ENCODE measurements at regions of chr10 and their contacts with region 1.

Region 1: GRCh38 chr10:119596537-119597404 is at the start of gene TIAL1:
- DNase-seq: peak; percentile 96
- ATAC-seq: peak; percentile 86
- H3K4me3 ChIP-seq: peak within 1 kb of the TSS; percentile 86 to 97 (median 90)
- H3K4me3 Mint-ChIP-seq: peak within 1 kb of the TSS; percentile 99
- H3K27ac ChIP-seq: peak within 1 kb of the TSS; percentile 88 to 94
- H3K27ac Mint-ChIP-seq: peak within 1 kb of the TSS; percentile 98
- H3K4me1 ChIP-seq: peaks cover 31 to 43% of the 10 kb centered on the region in 2 donors
- H3K4me1 Mint-ChIP-seq: peaks cover 54% of the 10 kb centered on the region
- H3K27me3 ChIP-seq: no peaks in the 10 kb centered on the region
- H3K27me3 Mint-ChIP-seq: no peaks in the 10 kb centered on the region
- CTCF ChIP-seq: no peak
- total RNA-seq, gene TIAL1: 159 and 175 TPM in 2 replicates

Region 2: DNA sequence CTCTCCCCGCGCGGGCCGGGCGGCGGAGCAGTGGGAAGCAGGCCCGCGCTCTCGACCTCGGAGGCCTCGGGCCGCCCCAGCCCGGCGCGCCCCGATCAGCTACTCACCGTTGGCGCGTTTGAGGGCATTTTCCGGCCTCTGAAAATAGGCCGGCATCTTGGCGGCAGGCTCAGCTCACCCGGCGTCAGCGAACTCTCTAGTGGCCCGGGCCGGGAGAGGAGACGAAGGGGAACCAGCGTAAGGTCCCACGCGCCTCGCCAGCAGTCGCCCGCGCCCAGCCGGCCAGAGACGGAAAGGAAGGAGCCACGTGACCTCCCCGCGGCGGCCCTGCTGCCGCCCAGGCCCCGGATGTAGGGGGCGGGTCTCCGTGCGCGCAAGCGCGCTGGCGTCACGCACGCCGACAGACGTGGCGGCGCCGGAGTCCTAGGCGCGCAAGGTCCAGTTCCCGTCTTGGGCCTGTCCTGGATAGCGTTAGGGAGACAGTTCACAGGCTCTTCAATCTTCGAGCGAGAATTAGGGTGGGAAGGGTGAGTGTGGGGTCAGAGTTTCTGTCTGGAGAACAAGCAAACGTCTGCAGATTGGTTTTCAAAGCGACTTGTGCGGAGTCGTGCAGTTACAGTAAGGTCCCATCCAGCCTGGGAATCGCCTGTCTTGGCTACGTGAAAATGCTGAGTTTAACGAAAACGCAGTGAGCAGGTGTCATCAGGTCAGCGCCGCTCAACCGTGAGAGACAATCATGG is 516.1 kb before region 1 on chr10 and contains the start of gene EIF3A:
- CTCF ChIA-PET with region 1: no interaction called
- POLR2A ChIA-PET with region 1: no interaction called
- intact Hi-C with region 1: loop called (anchors 1 kb)
- DNase-seq: peak; percentile 95
- ATAC-seq: peak; percentile 81
- H3K4me3 ChIP-seq: peak within 1 kb of the TSS; percentile 69 to 93 (median 86)
- H3K4me3 Mint-ChIP-seq: peak within 1 kb of the TSS; percentile 96
- H3K27ac ChIP-seq: peak within 1 kb of the TSS; percentile 92 to 97
- H3K27ac Mint-ChIP-seq: peak within 1 kb of the TSS; percentile 96
- H3K4me1 ChIP-seq: peaks cover 36 to 52% of the 10 kb centered on the region in 2 donors
- H3K4me1 Mint-ChIP-seq: peaks cover 50% of the 10 kb centered on the region
- H3K27me3 ChIP-seq: no peaks in the 10 kb centered on the region
- H3K27me3 Mint-ChIP-seq: no peaks in the 10 kb centered on the region
- CTCF ChIP-seq: no peak
- total RNA-seq, gene EIF3A: 94.3 and 94.5 TPM in 2 replicates

Region 3: GRCh38 chr10:119178372-119179119 is 418.2 kb before region 1 on chr10 and contains the start of gene PRDX3:
- CTCF ChIA-PET with region 1: no interaction called
- POLR2A ChIA-PET with region 1: no interaction called
- intact Hi-C with region 1: loop called (anchors 1 kb)
- DNase-seq: peak; percentile 92
- ATAC-seq: peak; percentile 99
- H3K4me3 ChIP-seq: peak within 1 kb of the TSS; percentile 88 to 98 (median 89)
- H3K4me3 Mint-ChIP-seq: peak within 1 kb of the TSS; percentile 94
- H3K27ac ChIP-seq: peak within 1 kb of the TSS; percentile 68 to 71
- H3K27ac Mint-ChIP-seq: peak within 1 kb of the TSS; percentile 90
- H3K4me1 ChIP-seq: peaks cover 11 to 15% of the 10 kb centered on the region in 2 donors
- H3K4me1 Mint-ChIP-seq: peaks cover 28% of the 10 kb centered on the region
- H3K27me3 ChIP-seq: no peaks in the 10 kb centered on the region
- H3K27me3 Mint-ChIP-seq: no peaks in the 10 kb centered on the region
- CTCF ChIP-seq: peak; percentile 29
- total RNA-seq, gene PRDX3: 36.2 and 36.3 TPM in 2 replicates

Region 4: GRCh38 chr10:119542988-119543813 is 53.6 kb before region 1 on chr10:
- CTCF ChIA-PET with region 1: no interaction called
- POLR2A ChIA-PET with region 1: no interaction called
- intact Hi-C with region 1: loop called (anchors 1 kb)
- DNase-seq: peak; percentile 81
- ATAC-seq: peak; percentile 46
- H3K4me3 ChIP-seq: peak overlapping the region in 4 of 5 experiments; percentile 58 to 78 (median 72)
- H3K4me3 Mint-ChIP-seq: peak overlapping the region; percentile 95
- H3K27ac ChIP-seq: no peak overlapping the region
- H3K27ac Mint-ChIP-seq: peak overlapping the region; percentile 85
- H3K4me1 ChIP-seq: peaks cover 11 to 22% of the 10 kb centered on the region in 2 donors
- H3K4me1 Mint-ChIP-seq: peaks cover 29% of the 10 kb centered on the region
- H3K27me3 ChIP-seq: peaks cover 0 to 3% (median 0%) of the 10 kb centered on the region in 4 experiments
- H3K27me3 Mint-ChIP-seq: peaks cover 8% of the 10 kb centered on the region
- CTCF ChIP-seq: peak; percentile 71

Region 5: DNA sequence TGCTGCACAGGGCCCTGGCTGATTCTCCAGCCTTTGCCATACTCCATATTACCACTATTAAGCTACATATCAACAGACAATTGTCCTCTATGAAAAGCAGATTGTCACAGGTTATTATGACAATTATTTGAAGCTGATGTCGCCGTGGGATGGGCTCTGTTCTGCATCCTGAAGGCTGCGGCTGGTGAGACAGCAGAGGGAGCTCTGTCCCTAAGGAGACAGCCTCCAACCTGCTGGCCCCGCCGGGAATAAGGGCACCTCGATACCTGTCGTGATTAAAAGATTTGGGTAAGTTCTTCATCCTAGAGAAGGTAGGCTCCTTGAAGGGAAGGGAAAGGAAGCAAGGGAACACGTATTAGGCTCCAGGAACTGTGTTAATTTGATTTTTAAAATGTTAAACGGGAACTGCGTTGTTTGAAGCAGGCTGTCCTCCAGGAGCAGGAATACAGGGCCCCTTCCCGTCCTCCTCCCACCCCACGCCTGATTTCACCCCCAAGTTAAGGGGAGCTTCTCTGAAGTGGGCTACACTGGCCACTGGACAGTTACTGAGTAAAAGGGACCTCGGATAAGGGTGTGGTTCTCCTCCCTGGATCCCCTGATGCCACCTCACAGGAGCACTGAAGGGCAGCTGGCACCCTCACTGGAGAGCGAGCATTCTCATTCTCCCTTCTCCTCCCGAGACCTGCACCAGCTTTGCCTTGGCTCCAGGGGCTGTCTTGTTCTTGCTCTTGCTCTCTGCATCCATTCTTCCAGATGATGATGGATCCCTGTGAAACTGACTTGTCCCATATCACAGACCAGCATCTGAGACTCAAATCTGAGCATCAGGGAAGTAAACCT is 11.8 kb after region 1 on chr10:
- CTCF ChIA-PET with region 1: no interaction called
- POLR2A ChIA-PET with region 1: no interaction called
- intact Hi-C with region 1: no loop called
- DNase-seq: peak; percentile 36
- ATAC-seq: no peak
- H3K4me3 ChIP-seq: no peak overlapping the region
- H3K4me3 Mint-ChIP-seq: no peak overlapping the region
- H3K27ac ChIP-seq: no peak overlapping the region
- H3K27ac Mint-ChIP-seq: no peak overlapping the region
- H3K4me1 ChIP-seq: peaks cover 0 to 5% of the 10 kb centered on the region in 2 donors
- H3K4me1 Mint-ChIP-seq: peaks cover 6% of the 10 kb centered on the region
- H3K27me3 ChIP-seq: no peaks in the 10 kb centered on the region
- H3K27me3 Mint-ChIP-seq: peaks cover 9% of the 10 kb centered on the region
- CTCF ChIP-seq: no peak

Region 6: GRCh38 chr10:119705434-119705831 is 108.7 kb after region 1 on chr10:
- CTCF ChIA-PET with region 1: interaction called, 3 read pairs
- POLR2A ChIA-PET with region 1: no interaction called
- intact Hi-C with region 1: loop called (anchors 1 kb)
- DNase-seq: peak; percentile 62
- ATAC-seq: peak; percentile 13
- H3K4me3 ChIP-seq: peak overlapping the region in 3 of 5 experiments; percentile 18 to 46 (median 42)
- H3K4me3 Mint-ChIP-seq: peak overlapping the region; percentile 90
- H3K27ac ChIP-seq: peak overlapping the region; percentile 94
- H3K27ac Mint-ChIP-seq: peak overlapping the region; percentile 98
- H3K4me1 ChIP-seq: peaks cover 93 to 97% of the 10 kb centered on the region in 2 donors
- H3K4me1 Mint-ChIP-seq: peaks cover 81% of the 10 kb centered on the region
- H3K27me3 ChIP-seq: no peaks in the 10 kb centered on the region
- H3K27me3 Mint-ChIP-seq: no peaks in the 10 kb centered on the region
- CTCF ChIP-seq: no peak

Region 7: GRCh38 chr10:119872860-119873681 is 276.3 kb after region 1 on chr10:
- CTCF ChIA-PET with region 1: no interaction called
- POLR2A ChIA-PET with region 1: interaction called, 5 read pairs
- intact Hi-C with region 1: loop called (anchors 1 kb)
- DNase-seq: peak; percentile 96
- ATAC-seq: peak; percentile 92
- H3K4me3 ChIP-seq: peak overlapping the region; percentile 71 to 90 (median 89)
- H3K4me3 Mint-ChIP-seq: peak overlapping the region; percentile 91
- H3K27ac ChIP-seq: peak overlapping the region; percentile 83
- H3K27ac Mint-ChIP-seq: peak overlapping the region; percentile 86
- H3K4me1 ChIP-seq: peaks cover 22 to 23% of the 10 kb centered on the region in 2 donors
- H3K4me1 Mint-ChIP-seq: peaks cover 33% of the 10 kb centered on the region
- H3K27me3 ChIP-seq: no peaks in the 10 kb centered on the region
- H3K27me3 Mint-ChIP-seq: no peaks in the 10 kb centered on the region
- CTCF ChIP-seq: no peak

Measured in B cell (primary cell).